Mammary epithelial cell (primary cell): ENCODE measurements at regions of chr6 and their contacts with region 1.

Region 1: GRCh38 chr6:166153966-166154365 is 13.7 kb downstream of the TBXT start:
- DNase-seq: no peak
- H3K4me3 ChIP-seq: no peak overlapping the region
- H3K27ac ChIP-seq: no peak overlapping the region
- H3K4me1 ChIP-seq: no peaks in the 10 kb centered on the region
- H3K27me3 ChIP-seq: no peaks in the 10 kb centered on the region
- CTCF ChIP-seq: no peak

Region 2: DNA sequence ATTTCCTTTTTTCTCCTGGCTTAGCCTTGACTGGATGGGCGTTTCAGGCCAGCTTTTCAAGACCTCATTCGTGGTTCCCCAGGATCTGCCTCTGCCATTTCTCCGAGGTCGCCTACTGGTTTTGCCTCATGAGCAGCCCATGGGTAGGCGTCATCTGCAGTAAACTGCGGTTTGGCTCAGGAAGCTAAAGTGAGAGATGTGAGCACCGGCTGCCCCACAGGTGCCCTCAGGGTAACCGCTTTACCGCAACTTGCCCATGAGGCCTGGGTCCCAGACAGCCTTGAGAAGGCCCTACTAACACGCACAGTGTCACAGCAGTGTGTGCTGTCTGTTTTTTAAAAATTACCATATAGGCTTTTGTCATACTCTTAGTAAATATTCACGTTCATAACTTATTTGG is 67.1 kb after region 1 on chr6:
- CTCF ChIA-PET with region 1: no interaction called
- dilution Hi-C with region 1: no loop called
- in situ Hi-C with region 1: no loop called
- intact Hi-C with region 1: loop called (anchors 2 kb)
- DNase-seq: no peak
- H3K4me3 ChIP-seq: no peak overlapping the region
- H3K27ac ChIP-seq: no peak overlapping the region
- H3K4me1 ChIP-seq: no peaks in the 10 kb centered on the region
- H3K27me3 ChIP-seq: no peaks in the 10 kb centered on the region
- CTCF ChIP-seq: no peak